ENCODE measurements at regions of chr15 and their contacts with region 1.

Region 1: DNA sequence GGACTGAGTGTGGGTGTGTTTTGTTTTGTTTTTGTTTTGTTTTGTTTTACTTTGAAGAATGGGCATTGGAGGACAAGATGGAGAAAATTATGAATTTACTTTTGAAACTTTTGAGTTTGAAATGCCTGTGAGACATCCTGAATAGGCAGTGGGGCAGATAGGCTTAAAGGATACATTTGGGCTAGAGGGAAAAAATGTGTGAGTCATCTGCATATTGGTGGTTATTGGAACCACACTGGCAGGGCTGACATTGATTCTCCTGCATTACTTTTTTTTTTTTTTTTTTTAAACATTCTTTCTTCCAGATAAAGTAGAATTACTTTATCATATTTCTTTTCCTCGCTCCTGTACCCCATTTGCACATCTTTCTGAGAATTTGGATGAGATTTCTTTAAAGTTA is 56.1 kb downstream of the CALML4 start:
- DNase-seq: no peak
- ATAC-seq: no peak
- H3K4me3 ChIP-seq: no peak overlapping the region
- H3K4me3 Mint-ChIP-seq: no peak overlapping the region
- H3K27ac ChIP-seq: no peak overlapping the region
- H3K27ac Mint-ChIP-seq: peak overlapping the region in 6 of 9 donors; percentile 1 to 77 (median 44)
- H3K4me1 ChIP-seq: no peaks in the 10 kb centered on the region
- H3K4me1 Mint-ChIP-seq: peaks cover 4 to 28% (median 24%) of the 10 kb centered on the region in 7 donors
- H3K27me3 ChIP-seq: no peaks in the 10 kb centered on the region
- H3K27me3 Mint-ChIP-seq: no peaks in the 10 kb centered on the region

Region 2: GRCh38 chr15:67967871-67968431 is 181.1 kb before region 1 on chr15:
- CTCF ChIA-PET with region 1: no interaction called
- POLR2A ChIA-PET with region 1: no interaction called
- intact Hi-C with region 1: loop called in 1 of 2 experiments (anchors 10 kb)
- DNase-seq: peak in 2 of 9 donors; percentile 6 to 19
- ATAC-seq: no peak
- H3K4me3 ChIP-seq: no peak overlapping the region
- H3K4me3 Mint-ChIP-seq: peak overlapping the region in 6 of 10 donors; percentile 19 to 63 (median 42)
- H3K27ac ChIP-seq: no peak overlapping the region
- H3K27ac Mint-ChIP-seq: no peak overlapping the region
- H3K4me1 ChIP-seq: no peaks in the 10 kb centered on the region
- H3K4me1 Mint-ChIP-seq: peaks cover 0 to 14% (median 4%) of the 10 kb centered on the region in 7 donors
- H3K27me3 ChIP-seq: peaks cover 0 to 3% of the 10 kb centered on the region in 2 donors
- H3K27me3 Mint-ChIP-seq: peaks cover 33 to 47% (median 38%) of the 10 kb centered on the region in 5 donors

Region 3: DNA sequence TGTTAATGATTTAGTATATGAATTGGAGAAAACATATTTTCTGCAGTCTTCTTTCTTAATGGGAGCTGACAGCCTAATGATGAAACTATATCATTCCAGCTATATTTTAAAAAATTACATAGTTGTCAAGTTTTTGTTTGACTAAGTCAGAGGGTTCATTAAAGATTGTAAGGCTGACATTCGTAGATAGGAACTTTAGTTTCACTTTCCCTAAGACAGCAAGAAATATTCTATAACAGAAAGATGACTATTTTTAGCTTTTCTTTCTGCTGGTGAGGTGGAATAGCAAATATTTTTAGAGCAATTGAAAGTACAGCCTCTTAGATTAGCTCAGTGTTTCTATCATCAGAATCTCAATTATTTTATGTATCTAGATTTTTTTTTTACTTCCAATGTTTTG is 34.7 kb before region 1 on chr15:
- CTCF ChIA-PET with region 1: no interaction called
- POLR2A ChIA-PET with region 1: no interaction called
- intact Hi-C with region 1: no loop called
- DNase-seq: peak in 3 of 9 donors; percentile 7 to 20 (median 19)
- ATAC-seq: peak; percentile 47
- H3K4me3 ChIP-seq: peak overlapping the region; percentile 23
- H3K4me3 Mint-ChIP-seq: peak overlapping the region; percentile 27 to 81 (median 72)
- H3K27ac ChIP-seq: peak overlapping the region; percentile 39
- H3K27ac Mint-ChIP-seq: peak overlapping the region in 7 of 9 donors; percentile 0 to 79 (median 14)
- H3K4me1 ChIP-seq: peaks cover 12 to 14% of the 10 kb centered on the region in 2 donors
- H3K4me1 Mint-ChIP-seq: peaks cover 37 to 95% (median 83%) of the 10 kb centered on the region in 7 donors
- H3K27me3 ChIP-seq: no peaks in the 10 kb centered on the region
- H3K27me3 Mint-ChIP-seq: no peaks in the 10 kb centered on the region